Activated CD4-positive, alpha-beta memory T cell treated with anti-CD3 and anti-CD28 coated beads, Interleukin-2, amount 10 ng/mL, durations not matched to agents 7 days and 5 days (primary cell): ENCODE measurements at regions of chr19 and their contacts with region 1.

Region 1: GRCh38 chr19:11374433-11375142 is at the start of gene SWSAP1:
- DNase-seq: peak; percentile 97
- H3K4me3 Mint-ChIP-seq: no peak within 1 kb of the TSS
- H3K27ac Mint-ChIP-seq: no peak within 1 kb of the TSS
- H3K4me1 Mint-ChIP-seq: peaks cover 30% of the 10 kb centered on the region
- H3K27me3 Mint-ChIP-seq: no peaks in the 10 kb centered on the region
- total RNA-seq, gene SWSAP1: 2.6 to 2.9 TPM

Region 2: DNA sequence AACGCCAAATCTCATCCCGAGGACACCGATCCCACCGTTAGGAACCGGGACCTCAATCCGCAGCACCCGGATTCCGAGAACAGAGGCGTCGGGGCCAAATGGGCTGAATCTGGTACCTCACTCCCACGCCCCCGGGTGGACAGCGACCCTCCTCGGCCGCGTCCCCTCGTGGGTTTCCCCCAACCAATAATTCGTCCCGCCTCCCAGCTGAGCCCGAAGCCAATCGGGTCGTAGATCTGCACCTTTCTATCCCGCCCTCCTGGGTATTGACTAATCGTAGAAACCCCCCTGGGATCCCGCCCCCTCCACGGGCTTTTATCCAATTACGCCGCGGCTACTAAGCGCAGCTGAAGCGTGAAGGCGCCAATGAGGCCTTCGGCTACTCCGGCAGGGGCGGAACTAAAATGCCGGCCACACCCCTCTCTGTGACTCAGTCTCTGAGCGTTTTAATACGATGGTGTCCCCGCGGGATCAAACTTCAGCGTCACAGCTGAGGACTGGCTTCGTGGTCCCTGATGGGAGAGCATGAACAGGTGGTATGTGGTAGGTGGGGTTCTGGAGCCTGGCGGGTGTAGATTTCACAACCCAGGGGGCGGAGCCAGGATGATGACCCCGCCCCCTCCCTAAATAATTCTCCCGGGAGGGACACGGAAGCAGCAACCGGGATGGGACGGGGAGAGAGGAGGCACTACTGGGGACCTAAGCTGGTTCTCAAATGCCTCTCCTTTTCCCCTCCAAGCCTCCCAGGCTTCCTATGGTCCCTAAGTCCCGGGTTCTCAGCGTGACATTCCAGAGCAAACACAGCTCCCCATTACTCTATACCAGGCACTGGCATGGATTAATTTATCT is 28.3 kb before region 1 on chr19 and contains the starts of genes CCDC159 and TMEM205:
- CTCF ChIA-PET with region 1: interaction called, 6 read pairs
- POLR2A ChIA-PET with region 1: interaction called, 15 read pairs
- DNase-seq: peak; percentile 99
- H3K4me3 Mint-ChIP-seq: peak within 1 kb of the TSS; percentile 93
- H3K27ac Mint-ChIP-seq: peak within 1 kb of the TSS; percentile 88
- H3K4me1 Mint-ChIP-seq: peaks cover 22% of the 10 kb centered on the region
- H3K27me3 Mint-ChIP-seq: no peaks in the 10 kb centered on the region
- total RNA-seq, gene CCDC159: 24.0 to 24.7 TPM
- total RNA-seq, gene TMEM205: 32.6 to 35.1 TPM

Region 3: DNA sequence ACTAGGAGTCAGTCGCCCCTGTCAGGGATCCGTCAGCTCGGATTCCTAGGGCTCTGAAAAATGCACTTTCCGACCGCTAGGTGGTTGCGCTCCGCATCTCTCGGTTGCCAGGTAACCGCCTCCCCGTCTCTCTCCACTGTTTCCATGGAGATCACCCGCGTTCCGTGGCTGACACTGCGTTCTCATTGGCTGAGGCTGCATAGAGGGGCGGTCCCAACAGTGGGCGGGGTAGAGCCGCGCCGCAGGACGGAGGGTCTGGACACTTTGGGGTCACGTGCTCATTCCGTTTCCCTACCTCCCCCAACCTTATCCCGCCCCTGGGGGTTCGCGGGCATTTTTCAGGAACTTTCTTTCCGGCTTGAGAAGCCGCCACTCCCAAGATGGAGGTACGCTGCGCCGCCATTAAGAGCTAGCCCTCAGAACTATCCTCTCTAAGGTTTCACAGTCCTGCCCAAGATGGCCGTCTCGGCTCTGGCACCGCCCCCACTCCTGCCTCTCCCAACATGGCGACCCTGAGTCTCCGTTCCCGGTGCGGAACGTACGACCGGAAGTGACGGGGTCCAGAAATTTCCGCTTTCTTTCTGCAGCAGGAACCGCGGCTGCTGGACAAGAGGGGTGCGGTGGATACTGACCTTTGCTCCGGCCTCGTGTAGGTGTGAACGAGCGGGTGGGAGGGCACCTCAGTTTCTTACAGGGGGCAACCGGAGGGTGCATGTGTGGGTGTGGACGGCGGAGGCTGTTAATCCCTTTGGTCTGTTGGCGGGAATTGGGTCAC is 60.7 kb after region 1 on chr19 and contains the starts of genes ODAD3 and PRKCSH:
- CTCF ChIA-PET with region 1: interaction called, 11 read pairs
- POLR2A ChIA-PET with region 1: interaction called, 4 read pairs
- DNase-seq: peak; percentile 99
- H3K4me3 Mint-ChIP-seq: peak within 1 kb of the TSS; percentile 99
- H3K27ac Mint-ChIP-seq: peak within 1 kb of the TSS; percentile 93
- H3K4me1 Mint-ChIP-seq: peaks cover 24% of the 10 kb centered on the region
- H3K27me3 Mint-ChIP-seq: peaks cover 1% of the 10 kb centered on the region
- total RNA-seq, gene ODAD3: not detected
- total RNA-seq, gene PRKCSH: 315 to 318 TPM

Region 4: GRCh38 chr19:11453468-11454341 is 79.1 kb after region 1 on chr19:
- CTCF ChIA-PET with region 1: no interaction called
- POLR2A ChIA-PET with region 1: no interaction called
- DNase-seq: no peak
- H3K4me3 Mint-ChIP-seq: no peak overlapping the region
- H3K27ac Mint-ChIP-seq: no peak overlapping the region
- H3K4me1 Mint-ChIP-seq: no peaks in the 10 kb centered on the region
- H3K27me3 Mint-ChIP-seq: no peaks in the 10 kb centered on the region